HCT116 (cell line): ENCODE measurements at regions of chr1 and their contacts with region 1.

Region 1: DNA sequence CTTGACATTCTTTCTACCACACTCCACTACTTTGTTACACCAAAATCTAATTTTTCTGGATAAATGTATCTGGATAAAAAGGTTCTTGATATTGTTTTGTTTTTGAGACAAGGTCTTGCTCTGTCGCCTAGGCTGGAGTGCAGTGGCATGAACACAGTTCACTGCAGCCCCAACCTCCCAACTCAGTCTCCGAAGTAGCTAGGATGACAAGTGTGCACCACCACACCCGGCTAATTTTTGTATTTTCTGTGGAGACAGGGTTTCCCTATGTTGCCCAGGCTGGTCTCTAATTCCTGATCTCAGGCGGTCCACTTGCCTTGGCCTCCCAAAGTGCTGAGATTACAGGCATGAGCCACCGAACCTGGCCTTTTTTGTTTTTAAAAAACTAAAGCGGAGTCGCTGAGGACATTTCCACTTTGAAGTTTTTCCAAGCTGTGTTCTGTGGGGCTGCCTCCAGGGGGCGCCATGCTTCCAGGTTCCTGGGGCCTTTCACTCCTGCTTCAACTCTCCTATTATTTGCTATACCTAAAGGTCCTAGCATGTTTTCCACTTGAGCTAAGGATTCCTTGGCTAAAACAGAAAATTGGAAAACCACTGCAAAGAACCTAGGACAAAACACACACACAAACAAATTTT is 14.1 kb upstream of the NCMAP start:
- DNase-seq: no peak
- ATAC-seq: peak; percentile 56; the same call in 1 of the 2 replicates
- H3K4me3 ChIP-seq: 0 out of 4 replicates have a peak overlapping the region, but pooled peaks of 1 of the 2 experiments have one; percentile 36
- H3K27ac ChIP-seq: peak overlapping the region; percentile 30
- H3K4me1 ChIP-seq: peaks cover 23 to 48% of the 10 kb centered on the region in 2 experiments
- H3K27me3 ChIP-seq: no peaks in the 10 kb centered on the region
- CTCF ChIP-seq: peak; percentile 68 to 92 (median 82)
- POLR2A ChIP-seq: no peak
- RAD21 ChIP-seq: peak; percentile 69

Region 2: GRCh38 chr1:24586970-24587820 is 45.4 kb after region 1 on chr1:
- CTCF ChIA-PET with region 1: interaction called, 24 read pairs
- POLR2A ChIA-PET with region 1: no interaction called
- RAD21 ChIA-PET with region 1: interaction called in 1 of 2 experiments, 4 read pairs
- intact Hi-C with region 1: no loop called
- DNase-seq: peak; percentile 37
- ATAC-seq: peak; percentile 96
- H3K4me3 ChIP-seq: no peak overlapping the region
- H3K27ac ChIP-seq: no peak overlapping the region
- H3K4me1 ChIP-seq: peaks cover 3 to 4% of the 10 kb centered on the region in 2 experiments; a peak in 2 of 4 replicates
- H3K27me3 ChIP-seq: peaks cover 8% of the 10 kb centered on the region; the same call in 1 of the 2 replicates
- CTCF ChIP-seq: peak; percentile 59 to 82 (median 80); a peak in 5 of 6 replicates
- POLR2A ChIP-seq: no peak
- RAD21 ChIP-seq: peak; percentile 71

Region 3: DNA sequence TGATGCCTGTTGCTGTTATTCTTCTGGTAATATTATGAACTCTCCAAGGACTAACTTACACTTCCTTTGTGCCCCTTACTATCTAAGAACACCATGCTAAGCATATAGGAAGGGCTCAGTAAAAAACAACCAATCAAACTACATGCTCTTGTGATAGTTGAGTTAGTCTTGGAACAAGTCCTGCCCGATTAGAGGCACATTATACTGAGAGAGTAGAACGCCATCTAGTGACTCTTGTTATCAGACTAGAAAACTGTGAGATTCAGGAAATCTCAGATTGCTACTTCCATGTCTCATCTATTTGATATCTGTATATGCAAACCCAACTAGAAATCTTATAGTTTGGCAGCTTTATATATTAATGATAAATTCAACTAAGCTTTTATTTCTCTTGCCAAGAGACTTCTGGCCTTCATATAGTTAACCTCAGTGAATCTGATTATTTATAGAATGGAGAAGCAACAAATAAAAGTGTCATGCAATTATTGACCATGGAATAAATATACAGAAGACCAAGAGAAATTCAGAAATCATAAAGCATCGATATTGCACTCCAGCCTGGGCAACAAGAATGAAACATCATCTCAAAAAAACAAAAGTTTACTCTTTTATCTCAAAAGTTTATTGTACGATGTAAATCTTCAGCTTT is 93.5 kb after region 1 on chr1:
- CTCF ChIA-PET with region 1: interaction called, 5 read pairs
- POLR2A ChIA-PET with region 1: no interaction called
- RAD21 ChIA-PET with region 1: no interaction called
- intact Hi-C with region 1: loop called (anchors 1 kb)
- DNase-seq: peak; percentile 65
- ATAC-seq: peak; percentile 97
- H3K4me3 ChIP-seq: no peak overlapping the region
- H3K27ac ChIP-seq: no peak overlapping the region
- H3K4me1 ChIP-seq: peaks cover 5 to 8% of the 10 kb centered on the region in 2 experiments; a peak in 2 of 4 replicates
- H3K27me3 ChIP-seq: no peaks in the 10 kb centered on the region
- CTCF ChIP-seq: peak; percentile 67 to 84 (median 70)
- POLR2A ChIP-seq: no peak
- RAD21 ChIP-seq: peak; percentile 90